HepG2 (cell line): ENCODE measurements at regions of chr2 and their contacts with region 1.

Region 1: DNA sequence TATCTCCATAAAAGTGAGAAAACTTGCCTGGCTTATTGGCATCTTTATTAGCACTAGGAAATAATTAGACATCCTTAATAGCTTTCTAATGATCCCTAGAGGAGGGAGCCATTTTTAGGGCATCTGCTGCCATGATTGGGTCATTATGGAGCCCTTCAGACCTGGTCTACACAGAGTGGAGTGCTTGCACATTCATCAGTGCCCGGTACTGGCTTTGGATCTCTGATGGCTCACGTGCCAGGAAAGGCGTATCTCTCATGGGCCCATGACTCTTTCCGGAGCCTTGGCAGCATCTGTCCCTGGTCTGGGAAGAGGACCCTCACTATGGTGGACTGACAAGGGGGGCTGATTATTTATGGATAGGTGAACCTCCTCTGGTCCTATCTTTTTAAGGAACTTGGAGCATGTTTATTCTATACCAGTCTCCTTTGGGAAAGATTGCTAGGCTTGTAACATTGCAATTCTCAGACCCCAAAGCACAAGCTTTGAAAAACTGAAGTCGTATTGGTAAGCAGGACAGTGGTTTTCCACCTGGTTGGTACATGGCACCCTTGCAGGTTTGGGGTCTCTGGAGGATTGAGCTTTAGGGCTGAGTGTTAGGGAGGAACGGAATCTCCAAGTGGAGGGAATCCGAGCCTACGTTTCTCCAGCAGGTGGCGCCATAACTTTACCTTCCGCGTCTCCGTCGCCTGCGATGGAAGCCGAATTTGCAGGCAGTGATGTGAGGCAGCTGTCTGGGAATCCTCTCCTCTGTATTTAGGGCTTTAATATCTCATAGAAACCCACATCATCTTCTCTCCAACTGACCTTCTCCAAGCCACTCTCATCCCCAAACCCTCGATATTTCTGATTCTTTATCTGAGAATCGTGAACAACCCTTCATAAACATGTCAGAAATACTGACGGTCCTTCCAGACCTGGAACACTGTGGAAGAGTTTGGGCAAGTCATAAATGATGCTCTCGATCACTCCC is 27.8 kb downstream of the SIX2 start:
- DNase-seq: peak; percentile 58
- ATAC-seq: peak; percentile 94
- H3K4me3 ChIP-seq: no peak overlapping the region
- H3K27ac ChIP-seq: no peak overlapping the region
- H3K4me1 ChIP-seq: no peaks in the 10 kb centered on the region
- H3K27me3 ChIP-seq: 0 out of 5 replicates have a peak, but pooled peaks cover 1 to 5% of the 10 kb centered on the region in 2 experiments
- CTCF ChIP-seq: peak; percentile 96
- EP300 ChIP-seq: no peak
- POLR2A ChIP-seq: no peak
- RAD21 ChIP-seq: peak; percentile 94

Region 2: DNA sequence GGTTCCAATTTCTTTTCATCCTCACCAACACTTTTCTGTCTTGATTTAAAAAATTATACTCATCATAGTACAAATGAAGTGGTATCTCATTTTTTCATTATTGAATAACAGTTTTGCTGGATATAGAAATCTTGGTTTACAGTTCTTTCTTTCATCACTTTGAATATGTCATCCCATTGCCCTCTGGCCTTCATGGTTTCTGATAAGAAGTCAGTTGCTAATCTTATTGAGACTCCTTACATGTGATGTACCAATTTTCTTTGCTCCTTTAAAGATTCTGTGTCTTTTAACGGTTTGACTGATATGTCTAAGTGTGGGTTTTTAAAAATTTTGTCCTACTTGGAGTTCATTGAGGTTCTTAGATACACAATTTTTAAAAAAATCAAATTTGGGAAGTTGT is 671.1 kb before region 1 on chr2:
- CTCF ChIA-PET with region 1: no interaction called
- POLR2A ChIA-PET with region 1: no interaction called
- in situ Hi-C with region 1: no loop called
- intact Hi-C with region 1: no loop called
- DNase-seq: no peak
- ATAC-seq: no peak
- H3K4me3 ChIP-seq: no peak overlapping the region
- H3K27ac ChIP-seq: no peak overlapping the region
- H3K4me1 ChIP-seq: peaks cover 2% of the 10 kb centered on the region
- H3K27me3 ChIP-seq: no peaks in the 10 kb centered on the region
- CTCF ChIP-seq: no peak
- EP300 ChIP-seq: no peak
- POLR2A ChIP-seq: no peak
- RAD21 ChIP-seq: no peak

Region 3: GRCh38 chr2:45494269-45494977 is 513.0 kb after region 1 on chr2:
- CTCF ChIA-PET with region 1: interaction called, 106 read pairs
- POLR2A ChIA-PET with region 1: no interaction called
- in situ Hi-C with region 1: loop called (anchors 5 kb)
- intact Hi-C with region 1: loop called (anchors 1 kb)
- DNase-seq: peak; percentile 64
- ATAC-seq: no peak
- H3K4me3 ChIP-seq: no peak overlapping the region
- H3K27ac ChIP-seq: no peak overlapping the region
- H3K4me1 ChIP-seq: no peaks in the 10 kb centered on the region
- H3K27me3 ChIP-seq: no peaks in the 10 kb centered on the region; a peak in 1 of 5 replicates
- CTCF ChIP-seq: peak; percentile 87
- EP300 ChIP-seq: no peak
- POLR2A ChIP-seq: no peak
- RAD21 ChIP-seq: peak; percentile 86

Region 4: DNA sequence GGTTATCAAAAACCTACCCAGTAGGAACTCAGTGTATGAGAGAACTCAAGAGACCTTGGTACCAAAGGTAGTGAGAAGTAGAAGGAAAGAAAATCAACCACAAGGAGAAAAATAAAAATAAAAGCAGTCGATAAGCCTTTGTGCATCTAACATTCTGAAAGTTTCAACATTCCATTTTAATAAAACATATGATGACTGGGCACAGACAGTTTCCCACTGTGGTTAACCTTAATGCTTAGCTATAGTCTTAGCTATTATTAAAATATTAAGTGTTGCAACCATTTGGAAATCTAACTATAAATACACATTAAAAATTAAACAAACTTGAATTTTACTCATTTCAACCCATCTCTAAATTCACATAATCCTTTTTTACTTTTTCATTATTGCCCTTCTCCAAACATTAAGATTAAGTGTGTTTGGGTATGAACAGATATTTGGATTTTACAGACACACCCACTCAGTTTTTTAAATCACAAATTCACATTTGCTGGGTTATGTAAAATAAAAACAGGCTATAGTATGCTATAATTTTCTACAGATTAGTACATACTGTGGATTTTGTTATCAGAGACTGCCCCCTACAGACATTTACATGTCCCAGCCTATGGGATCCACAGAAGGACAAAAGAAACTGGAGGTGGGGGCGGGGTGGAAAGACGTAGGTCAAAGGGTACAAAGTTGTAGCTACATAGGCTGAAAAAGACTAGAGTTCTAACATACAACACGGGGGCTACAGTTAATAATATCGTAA is 596.8 kb after region 1 on chr2:
- CTCF ChIA-PET with region 1: no interaction called
- POLR2A ChIA-PET with region 1: no interaction called
- in situ Hi-C with region 1: no loop called
- intact Hi-C with region 1: loop called (anchors 1 kb)
- DNase-seq: peak; percentile 42
- ATAC-seq: peak; percentile 71
- H3K4me3 ChIP-seq: no peak overlapping the region
- H3K27ac ChIP-seq: no peak overlapping the region
- H3K4me1 ChIP-seq: no peaks in the 10 kb centered on the region
- H3K27me3 ChIP-seq: no peaks in the 10 kb centered on the region
- CTCF ChIP-seq: peak; percentile 55
- EP300 ChIP-seq: no peak
- POLR2A ChIP-seq: no peak
- RAD21 ChIP-seq: no peak